MCF 10A (cell line): ENCODE measurements at regions of chr1 and their contacts with region 1.

Region 1: DNA sequence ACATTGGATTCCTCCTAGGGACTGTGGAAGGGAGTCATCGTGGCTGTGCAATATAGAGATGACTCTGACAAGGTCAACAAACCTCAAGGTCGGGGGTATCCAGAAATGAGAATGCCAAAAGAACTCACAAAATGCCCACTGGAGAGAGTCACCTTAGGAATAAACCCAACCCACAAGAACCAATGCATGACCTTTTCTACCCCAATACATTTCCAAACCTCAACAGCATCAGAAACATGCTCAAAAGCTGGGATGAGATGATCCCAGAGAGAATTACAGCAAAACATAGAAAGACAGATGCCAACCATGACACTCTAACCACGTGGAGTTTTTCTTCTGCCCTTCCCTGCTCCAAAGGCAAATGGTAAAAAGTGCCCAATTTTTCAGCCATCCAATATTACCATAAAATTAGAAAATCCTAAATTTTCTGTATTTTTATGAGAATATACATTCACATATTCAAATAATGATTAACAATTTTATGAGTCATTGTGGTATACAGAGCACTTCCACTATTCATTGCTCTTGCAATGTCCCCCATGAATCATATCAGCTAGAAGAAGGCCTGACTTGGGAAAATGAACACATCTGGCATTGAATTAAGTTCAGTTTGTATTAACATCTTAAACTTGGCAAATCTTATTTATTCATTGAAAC is 88.2 kb upstream of the PALMD start:
- DNase-seq: peak; percentile 66
- H3K4me3 Mint-ChIP-seq: no peak overlapping the region
- H3K27ac Mint-ChIP-seq: no peak overlapping the region
- H3K4me1 Mint-ChIP-seq: peaks cover 15% of the 10 kb centered on the region
- H3K27me3 Mint-ChIP-seq: no peaks in the 10 kb centered on the region
- CTCF ChIP-seq: no peak

Region 2: GRCh38 chr1:99621340-99621901 is 63.7 kb after region 1 on chr1:
- CTCF ChIA-PET with region 1: no interaction called
- POLR2A ChIA-PET with region 1: no interaction called
- intact Hi-C with region 1: loop called (anchors 5 kb)
- DNase-seq: peak; percentile 89
- H3K4me3 Mint-ChIP-seq: no peak overlapping the region
- H3K27ac Mint-ChIP-seq: peak overlapping the region; percentile 81
- H3K4me1 Mint-ChIP-seq: peaks cover 15% of the 10 kb centered on the region
- H3K27me3 Mint-ChIP-seq: no peaks in the 10 kb centered on the region
- CTCF ChIP-seq: no peak